Activated B cell treated with CpG ODN at 0.5 μM for 24 hours (primary cell): ENCODE measurements at regions of chr2 and their contacts with region 1.

Region 1: GRCh38 chr2:206765242-206766056 is at the starts of genes FASTKD2 and MDH1B:
- DNase-seq: peak; percentile 77
- ATAC-seq: peak; percentile 87
- H3K4me3 Mint-ChIP-seq: peak within 1 kb of the TSS; percentile 94
- H3K27ac Mint-ChIP-seq: peak within 1 kb of the TSS; percentile 96
- H3K4me1 Mint-ChIP-seq: peaks cover 34% of the 10 kb centered on the region
- H3K27me3 Mint-ChIP-seq: peaks cover 3% of the 10 kb centered on the region
- CTCF ChIP-seq: no peak
- total RNA-seq, gene FASTKD2: 29.1 and 29.6 TPM in 2 replicates
- total RNA-seq, gene MDH1B: not detected in 2 replicates

Region 2: GRCh38 chr2:206085742-206086445 is 679.6 kb before region 1 on chr2 and contains the start of gene INO80D:
- CTCF ChIA-PET with region 1: interaction called, 3 read pairs
- POLR2A ChIA-PET with region 1: no interaction called
- intact Hi-C with region 1: loop called (anchors 5 kb)
- DNase-seq: peak; percentile 76
- ATAC-seq: peak; percentile 89
- H3K4me3 Mint-ChIP-seq: peak within 1 kb of the TSS; percentile 99
- H3K27ac Mint-ChIP-seq: peak within 1 kb of the TSS; percentile 100
- H3K4me1 Mint-ChIP-seq: peaks cover 42% of the 10 kb centered on the region
- H3K27me3 Mint-ChIP-seq: no peaks in the 10 kb centered on the region
- CTCF ChIP-seq: no peak
- total RNA-seq, gene INO80D: 52.1 and 53.1 TPM in 2 replicates

Region 3: GRCh38 chr2:206274434-206275268 is 490.8 kb before region 1 on chr2 and contains the start of gene ZDBF2:
- CTCF ChIA-PET with region 1: no interaction called
- POLR2A ChIA-PET with region 1: no interaction called
- intact Hi-C with region 1: loop called (anchors 10 kb)
- DNase-seq: peak; percentile 58
- ATAC-seq: peak; percentile 86
- H3K4me3 Mint-ChIP-seq: peak within 1 kb of the TSS; percentile 84
- H3K27ac Mint-ChIP-seq: peak within 1 kb of the TSS; percentile 69
- H3K4me1 Mint-ChIP-seq: peaks cover 18% of the 10 kb centered on the region
- H3K27me3 Mint-ChIP-seq: peaks cover 43% of the 10 kb centered on the region
- CTCF ChIP-seq: no peak
- total RNA-seq, gene ZDBF2: 6.7 and 8.0 TPM in 2 replicates

Region 4: DNA sequence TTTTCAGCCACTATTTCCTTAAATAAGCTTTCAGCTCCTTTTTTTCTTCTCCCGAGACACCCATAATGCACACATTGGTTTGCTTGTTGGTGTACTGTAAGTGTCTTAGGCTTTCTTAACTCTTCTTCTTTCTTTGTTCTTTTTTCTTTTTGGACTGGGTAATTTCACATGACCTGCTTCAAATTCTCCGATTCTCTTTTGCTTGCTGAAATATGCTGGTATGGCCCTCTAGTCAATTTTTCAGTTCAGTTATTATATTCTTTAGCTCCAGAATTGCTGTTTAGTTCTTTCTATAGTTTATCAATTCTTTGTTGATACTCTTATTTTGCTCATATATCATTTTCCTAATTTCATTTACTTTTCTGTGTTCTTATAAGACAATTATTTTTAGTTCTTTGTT is 15.2 kb after region 1 on chr2:
- CTCF ChIA-PET with region 1: interaction called, 3 read pairs
- POLR2A ChIA-PET with region 1: interaction called, 6 read pairs
- intact Hi-C with region 1: loop called (anchors 2 kb)
- DNase-seq: no peak
- ATAC-seq: no peak
- H3K4me3 Mint-ChIP-seq: no peak overlapping the region
- H3K27ac Mint-ChIP-seq: no peak overlapping the region
- H3K4me1 Mint-ChIP-seq: peaks cover 12% of the 10 kb centered on the region
- H3K27me3 Mint-ChIP-seq: no peaks in the 10 kb centered on the region
- CTCF ChIP-seq: no peak

Region 5: DNA sequence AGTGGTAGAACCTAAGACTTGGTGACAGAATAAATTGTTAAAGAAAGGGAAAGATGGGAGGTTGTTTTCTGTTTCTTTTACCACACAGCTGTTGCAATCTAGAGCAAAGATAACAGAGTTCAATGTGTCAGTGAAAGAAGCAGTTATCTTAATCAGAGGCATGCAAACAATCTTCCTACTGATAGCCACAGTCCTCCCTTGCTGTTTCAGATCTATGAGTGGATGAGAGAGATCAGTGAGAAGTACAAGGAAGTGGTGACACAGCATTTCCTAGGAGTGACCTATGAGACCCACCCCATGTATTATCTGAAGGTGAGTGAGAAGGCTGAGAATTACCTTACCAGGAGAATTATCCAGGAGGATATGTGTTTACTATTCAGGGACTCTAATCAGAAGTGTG is 189.8 kb after region 1 on chr2:
- CTCF ChIA-PET with region 1: no interaction called
- POLR2A ChIA-PET with region 1: no interaction called
- intact Hi-C with region 1: no loop called
- DNase-seq: no peak
- ATAC-seq: no peak
- H3K4me3 Mint-ChIP-seq: no peak overlapping the region
- H3K27ac Mint-ChIP-seq: no peak overlapping the region
- H3K4me1 Mint-ChIP-seq: no peaks in the 10 kb centered on the region
- H3K27me3 Mint-ChIP-seq: peaks cover 3% of the 10 kb centered on the region
- CTCF ChIP-seq: no peak

Region 6: GRCh38 chr2:207710814-207711740 is 945.6 kb after region 1 on chr2 and contains the start of gene CCNYL1:
- CTCF ChIA-PET with region 1: no interaction called
- POLR2A ChIA-PET with region 1: interaction called, 4 read pairs
- intact Hi-C with region 1: loop called (anchors 1 kb)
- DNase-seq: peak; percentile 92
- ATAC-seq: peak; percentile 95
- H3K4me3 Mint-ChIP-seq: peak within 1 kb of the TSS; percentile 95
- H3K27ac Mint-ChIP-seq: peak within 1 kb of the TSS; percentile 85
- H3K4me1 Mint-ChIP-seq: peaks cover 23% of the 10 kb centered on the region
- H3K27me3 Mint-ChIP-seq: no peaks in the 10 kb centered on the region
- CTCF ChIP-seq: no peak
- total RNA-seq, gene CCNYL1: 12.2 and 13.5 TPM in 2 replicates

Region 7: GRCh38 chr2:208265801-208266552 is 1500.5 kb after region 1 on chr2 and contains the start of gene PIKFYVE:
- CTCF ChIA-PET with region 1: no interaction called
- POLR2A ChIA-PET with region 1: no interaction called
- intact Hi-C with region 1: loop called (anchors 5 kb)
- DNase-seq: peak; percentile 85
- ATAC-seq: peak; percentile 87
- H3K4me3 Mint-ChIP-seq: peak within 1 kb of the TSS; percentile 95
- H3K27ac Mint-ChIP-seq: peak within 1 kb of the TSS; percentile 95
- H3K4me1 Mint-ChIP-seq: peaks cover 56% of the 10 kb centered on the region
- H3K27me3 Mint-ChIP-seq: no peaks in the 10 kb centered on the region
- CTCF ChIP-seq: no peak
- total RNA-seq, gene PIKFYVE: 92.2 and 106 TPM in 2 replicates